ENCODE measurements at regions of chr5 and their contacts with region 1.

Region 1: DNA sequence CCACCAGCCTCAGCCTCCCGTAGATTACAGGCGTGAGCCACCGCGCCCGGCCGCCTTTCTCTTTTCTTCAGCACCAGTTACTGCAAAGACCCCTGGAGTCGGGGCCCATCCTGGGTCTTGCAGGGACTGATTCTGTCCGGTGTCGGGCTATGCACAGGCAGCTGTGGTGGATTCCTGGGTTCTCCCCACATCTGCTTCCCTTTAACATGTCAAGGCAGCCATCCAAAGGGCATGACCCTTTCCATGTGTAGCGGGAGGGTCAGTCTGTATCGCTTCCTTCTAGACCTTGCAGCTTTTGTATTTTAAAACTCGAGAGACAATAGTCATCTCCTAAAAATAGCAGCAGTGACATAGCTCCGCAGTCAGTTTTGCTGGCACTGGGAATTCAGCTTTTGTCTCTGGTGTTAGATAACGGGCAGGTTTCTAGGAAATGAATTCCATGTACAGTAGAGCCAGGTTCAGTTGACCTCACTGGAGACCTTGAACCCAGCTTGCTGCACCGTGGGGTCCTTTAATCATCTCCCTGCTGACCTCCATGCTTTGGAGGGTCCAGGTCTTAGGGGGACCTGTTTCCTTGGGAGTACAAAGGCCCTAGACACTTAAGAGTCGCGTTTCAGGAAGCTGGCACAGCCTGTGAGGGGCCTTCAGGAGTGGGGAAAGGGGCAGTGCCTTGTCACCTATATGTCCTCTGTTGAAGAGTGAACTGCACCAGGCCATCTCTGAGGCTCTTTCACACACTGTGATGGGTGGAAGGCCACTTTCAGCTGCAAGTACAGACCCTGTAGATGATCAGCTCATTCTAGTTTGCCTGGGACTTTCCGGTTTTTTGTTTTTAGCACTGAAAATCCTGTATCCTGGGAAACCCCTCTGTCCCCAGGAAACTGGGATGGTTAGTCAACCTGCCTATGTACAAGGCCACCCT is 13.8 kb downstream of the ANKRD33B start:
- DNase-seq: peak in 2 of 4 experiments; percentile 50 to 80
- ATAC-seq: peak; percentile 58
- H3K4me3 ChIP-seq: no peak overlapping the region
- H3K27ac ChIP-seq: peak overlapping the region; percentile 12; the same call in 1 of the 3 replicates
- H3K4me1 ChIP-seq: peaks cover 10 to 16% of the 10 kb centered on the region in 2 experiments; a peak in 4 of 5 replicates
- H3K27me3 ChIP-seq: no peaks in the 10 kb centered on the region
- CTCF ChIP-seq: no peak
- EP300 ChIP-seq: peak; percentile 22; the same call in 1 of the 2 replicates
- POLR2A ChIP-seq: no peak
- RAD21 ChIP-seq: no peak

Region 2: DNA sequence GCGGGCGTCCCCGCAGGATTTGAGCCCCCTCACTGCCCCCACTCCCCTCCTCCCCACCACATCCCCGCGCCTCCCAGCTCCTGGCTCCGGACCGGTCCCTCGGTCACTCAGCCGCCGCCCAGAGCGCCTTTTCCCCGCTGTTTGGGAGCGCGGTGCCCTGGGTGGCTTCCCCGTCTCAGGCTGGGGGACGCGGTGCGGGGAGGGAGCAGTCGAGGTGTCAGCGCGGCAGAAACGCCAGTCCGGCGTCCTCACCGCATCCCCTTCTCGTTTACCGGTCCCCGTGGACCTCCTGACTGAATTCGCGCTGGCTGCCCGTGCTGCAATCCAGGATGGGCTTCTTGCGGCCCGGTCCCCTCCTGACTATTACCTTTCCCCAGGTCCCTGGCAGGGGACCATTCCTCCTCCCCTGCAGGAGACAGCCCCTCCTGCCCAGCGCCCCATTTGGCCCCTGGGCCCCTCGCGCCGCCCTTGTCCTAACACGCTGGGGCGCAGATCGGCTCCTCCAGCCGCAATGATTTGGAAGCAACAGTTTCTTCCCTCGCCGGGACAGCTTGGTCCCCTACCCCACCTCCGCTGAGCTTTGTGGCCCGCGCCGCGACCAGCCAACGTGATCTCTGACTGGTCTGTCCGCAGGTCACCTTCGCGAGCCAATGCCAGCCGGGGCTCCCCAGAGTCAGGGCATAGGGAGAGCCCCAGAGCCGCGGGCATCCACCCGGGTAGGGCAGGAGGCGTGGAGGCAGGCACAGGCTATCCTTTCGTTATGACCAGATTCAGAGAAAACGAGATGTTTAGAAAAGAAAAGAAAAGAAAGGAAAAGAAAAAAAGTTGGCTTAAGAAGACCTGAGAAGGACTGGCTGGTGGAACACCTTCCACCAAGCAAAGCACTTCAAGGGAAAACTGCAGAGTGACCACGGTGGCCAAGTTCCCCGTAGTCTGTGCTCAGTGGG is 12.5 kb before region 1 on chr5:
- CTCF ChIA-PET with region 1: no interaction called
- POLR2A ChIA-PET with region 1: interaction called, 16 read pairs
- in situ Hi-C with region 1: no loop called
- intact Hi-C with region 1: no loop called
- DNase-seq: peak in 2 of 4 experiments; percentile 20 to 31
- ATAC-seq: peak; percentile 11
- H3K4me3 ChIP-seq: peak overlapping the region; percentile 51; the same call in 1 of the 2 replicates
- H3K27ac ChIP-seq: no peak overlapping the region
- H3K4me1 ChIP-seq: peaks cover 0 to 31% of the 10 kb centered on the region in 2 experiments; a peak in 2 of 5 replicates
- H3K27me3 ChIP-seq: peaks cover 10 to 49% of the 10 kb centered on the region in 2 experiments; a peak in 4 of 5 replicates
- CTCF ChIP-seq: no peak
- EP300 ChIP-seq: no peak
- POLR2A ChIP-seq: no peak
- RAD21 ChIP-seq: no peak

Region 3: DNA sequence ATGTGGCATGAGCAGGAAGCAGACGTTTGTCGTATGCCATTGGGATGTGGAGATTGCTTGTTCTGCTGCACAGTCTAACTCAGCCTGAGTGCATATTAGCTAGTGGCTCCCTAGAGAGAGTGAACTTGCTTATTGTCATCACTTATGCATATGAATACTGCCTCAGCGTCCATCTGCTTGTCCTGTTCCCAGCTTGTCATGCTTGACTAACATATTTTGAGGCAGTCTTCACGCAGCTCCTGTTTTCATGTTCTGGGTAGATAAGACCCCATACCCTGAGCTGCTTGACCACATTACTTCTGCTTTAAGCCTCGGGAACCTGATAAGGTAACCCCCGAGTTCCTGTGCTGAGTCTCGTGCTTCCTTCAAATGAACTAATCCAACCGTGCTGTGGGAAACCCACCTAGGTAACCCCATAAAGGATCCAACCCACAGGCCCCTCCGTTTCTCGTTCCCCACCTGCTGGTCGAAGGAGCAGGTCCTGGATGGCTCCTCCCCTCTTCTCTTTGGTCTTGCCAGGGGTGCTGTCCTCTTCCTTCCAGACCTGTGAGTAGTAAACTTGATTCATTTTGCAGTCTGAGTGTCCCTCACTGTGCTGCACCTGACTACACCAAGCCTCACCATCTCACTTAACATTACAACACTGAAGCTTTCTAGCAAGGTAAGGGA is 11.3 kb after region 1 on chr5:
- CTCF ChIA-PET with region 1: no interaction called
- POLR2A ChIA-PET with region 1: interaction called, 10 read pairs
- in situ Hi-C with region 1: no loop called
- intact Hi-C with region 1: no loop called
- DNase-seq: peak; percentile 98 to 99 (median 98)
- ATAC-seq: peak; percentile 92
- H3K4me3 ChIP-seq: no peak overlapping the region; the same call in 1 of the 2 replicates
- H3K27ac ChIP-seq: peak overlapping the region; percentile 72
- H3K4me1 ChIP-seq: peaks cover 33 to 35% of the 10 kb centered on the region in 2 experiments
- H3K27me3 ChIP-seq: no peaks in the 10 kb centered on the region
- CTCF ChIP-seq: peak in 2 of 3 experiments; percentile 7 to 13; a peak in 1 of 6 replicates
- EP300 ChIP-seq: peak; percentile 98
- POLR2A ChIP-seq: no peak
- RAD21 ChIP-seq: peak; percentile 5 to 40; a peak in 3 of 4 replicates

Measured in K562 (cell line).